A673 (cell line): ENCODE measurements at regions of chr20 and their contacts with region 1.

Region 1: GRCh38 chr20:35146920-35147574 is at the start of gene EDEM2:
- DNase-seq: peak; percentile 97
- H3K4me3 ChIP-seq: peak within 1 kb of the TSS; percentile 72
- H3K27ac ChIP-seq: peak within 1 kb of the TSS; percentile 55
- H3K4me1 ChIP-seq: no peaks in the 10 kb centered on the region
- H3K27me3 ChIP-seq: no peaks in the 10 kb centered on the region
- CTCF ChIP-seq: no peak
- total RNA-seq, gene EDEM2: 13.6 and 16.1 TPM in 2 replicates

Region 2: DNA sequence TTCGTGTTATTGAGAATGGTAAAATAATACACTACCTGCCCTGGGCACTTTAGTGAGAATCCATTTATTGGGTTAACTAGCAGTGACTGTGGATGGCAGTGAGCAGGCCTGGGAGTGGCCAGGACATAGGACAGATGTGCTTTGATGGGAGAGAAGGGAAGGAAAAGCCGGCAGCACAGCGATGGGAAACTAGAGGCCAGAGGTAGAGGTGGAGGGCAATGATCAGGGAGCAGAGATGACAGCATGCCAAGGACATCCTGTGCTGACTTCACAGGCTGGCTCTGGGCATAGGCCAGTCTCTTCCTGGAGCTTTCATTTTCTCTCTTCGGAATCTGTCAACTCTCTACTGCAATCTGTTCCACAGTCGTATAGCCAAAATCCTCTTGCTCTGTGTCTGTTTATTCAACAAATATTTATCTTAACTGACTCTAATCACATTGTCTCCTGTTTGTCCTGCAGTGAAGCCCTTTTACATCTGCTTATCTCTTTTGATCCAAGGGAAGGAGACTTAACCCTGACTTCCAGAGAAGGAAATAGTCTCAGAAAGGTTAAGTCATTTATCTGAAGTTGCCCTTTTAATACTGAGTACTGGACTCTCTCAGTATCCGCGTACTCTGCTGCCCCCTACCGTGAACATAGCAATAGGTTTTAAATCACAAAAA is 61.0 kb after region 1 on chr20:
- CTCF ChIA-PET with region 1: interaction called, 4 read pairs
- POLR2A ChIA-PET with region 1: no interaction called
- intact Hi-C with region 1: loop called (anchors 1 kb)
- DNase-seq: peak; percentile 77
- H3K4me3 ChIP-seq: no peak overlapping the region
- H3K27ac ChIP-seq: no peak overlapping the region
- H3K4me1 ChIP-seq: no peaks in the 10 kb centered on the region
- H3K27me3 ChIP-seq: no peaks in the 10 kb centered on the region
- CTCF ChIP-seq: peak; percentile 78

Region 3: GRCh38 chr20:35269055-35269781 is 122.2 kb after region 1 on chr20:
- CTCF ChIA-PET with region 1: interaction called, 5 read pairs
- POLR2A ChIA-PET with region 1: no interaction called
- intact Hi-C with region 1: loop called (anchors 2 kb)
- DNase-seq: peak; percentile 62
- H3K4me3 ChIP-seq: no peak overlapping the region
- H3K27ac ChIP-seq: no peak overlapping the region
- H3K4me1 ChIP-seq: no peaks in the 10 kb centered on the region
- H3K27me3 ChIP-seq: no peaks in the 10 kb centered on the region
- CTCF ChIP-seq: peak; percentile 87

Region 4: DNA sequence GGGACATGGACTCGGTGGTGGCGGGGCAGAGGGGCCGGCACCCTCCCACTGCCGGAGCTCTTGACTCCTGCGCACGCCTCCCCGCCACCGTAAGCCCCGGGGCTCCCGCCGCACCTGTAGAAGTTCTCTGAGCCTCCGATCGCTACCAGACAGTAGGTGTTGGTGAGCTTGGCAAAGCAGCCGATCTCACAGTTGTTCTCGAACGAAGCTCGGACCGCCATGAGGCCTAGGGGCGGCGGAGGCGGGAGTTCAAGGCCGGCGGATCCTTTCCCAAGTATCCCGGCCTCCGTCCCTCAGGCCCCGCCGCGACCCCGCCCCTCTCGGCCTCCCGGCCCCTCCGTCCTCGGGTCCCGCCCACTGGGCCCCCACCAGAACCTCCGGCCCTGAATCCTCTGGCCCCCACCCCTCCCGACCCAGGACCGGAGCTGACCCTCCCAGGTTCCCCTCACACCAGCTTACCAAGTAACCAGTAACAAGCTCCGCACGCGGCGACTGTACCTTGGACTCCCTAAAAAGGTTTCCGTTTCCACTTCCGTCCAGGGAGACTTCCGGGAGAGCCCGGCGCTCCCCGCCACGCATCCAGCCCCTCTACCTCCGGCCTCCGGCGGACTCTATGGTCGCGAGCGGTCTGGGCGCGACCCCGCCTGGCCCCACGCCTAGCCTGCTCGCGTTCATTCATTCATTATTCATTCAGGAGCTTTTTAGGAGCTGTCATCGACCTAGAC is 137.4 kb after region 1 on chr20 and contains the start of gene EIF6:
- CTCF ChIA-PET with region 1: interaction called, 10 read pairs
- POLR2A ChIA-PET with region 1: no interaction called
- intact Hi-C with region 1: no loop called
- DNase-seq: peak; percentile 91
- H3K4me3 ChIP-seq: peak within 1 kb of the TSS; percentile 88
- H3K27ac ChIP-seq: peak within 1 kb of the TSS; percentile 74
- H3K4me1 ChIP-seq: peaks cover 7% of the 10 kb centered on the region
- H3K27me3 ChIP-seq: no peaks in the 10 kb centered on the region
- CTCF ChIP-seq: no peak
- total RNA-seq, gene EIF6: 172 and 180 TPM in 2 replicates

Region 5: GRCh38 chr20:35447082-35447789 is 300.2 kb after region 1 on chr20:
- CTCF ChIA-PET with region 1: interaction called, 3 read pairs
- POLR2A ChIA-PET with region 1: no interaction called
- intact Hi-C with region 1: loop called (anchors 5 kb)
- DNase-seq: peak; percentile 89
- H3K4me3 ChIP-seq: peak overlapping the region; percentile 46
- H3K27ac ChIP-seq: no peak overlapping the region
- H3K4me1 ChIP-seq: peaks cover 8% of the 10 kb centered on the region
- H3K27me3 ChIP-seq: no peaks in the 10 kb centered on the region
- CTCF ChIP-seq: peak; percentile 91